Heart right ventricle (tissue), 16 donors: ENCODE measurements at regions of chr9 and their contacts with region 1.

Region 1: GRCh38 chr9:68462105-68462775 is 78.4 kb downstream of the TMEM252 start:
- DNase-seq: peak in 1 of 2 donors; percentile 26
- ATAC-seq: peak; percentile 54 to 85 (median 76)
- H3K4me3 ChIP-seq: no peak overlapping the region
- H3K27ac ChIP-seq: peak overlapping the region in 8 of 10 donors; percentile 0 to 72 (median 42)
- H3K4me1 ChIP-seq: peaks cover 0 to 68% (median 32%) of the 10 kb centered on the region in 9 donors
- H3K27me3 ChIP-seq: no peaks in the 10 kb centered on the region
- CTCF ChIP-seq: no peak

Region 2: GRCh38 chr9:68476847-68477246 is 14.6 kb after region 1 on chr9:
- intact Hi-C with region 1: loop called in 1 of 10 experiments (anchors 2 kb)
- DNase-seq: peak in 1 of 2 donors; percentile 51
- ATAC-seq: peak in 7 of 8 donors; percentile 53 to 71 (median 66)
- H3K4me3 ChIP-seq: no peak overlapping the region
- H3K27ac ChIP-seq: peak overlapping the region in 6 of 10 donors; percentile 8 to 70 (median 17)
- H3K4me1 ChIP-seq: peaks cover 5 to 51% (median 23%) of the 10 kb centered on the region in 9 donors
- H3K27me3 ChIP-seq: no peaks in the 10 kb centered on the region
- CTCF ChIP-seq: no peak

Region 3: DNA sequence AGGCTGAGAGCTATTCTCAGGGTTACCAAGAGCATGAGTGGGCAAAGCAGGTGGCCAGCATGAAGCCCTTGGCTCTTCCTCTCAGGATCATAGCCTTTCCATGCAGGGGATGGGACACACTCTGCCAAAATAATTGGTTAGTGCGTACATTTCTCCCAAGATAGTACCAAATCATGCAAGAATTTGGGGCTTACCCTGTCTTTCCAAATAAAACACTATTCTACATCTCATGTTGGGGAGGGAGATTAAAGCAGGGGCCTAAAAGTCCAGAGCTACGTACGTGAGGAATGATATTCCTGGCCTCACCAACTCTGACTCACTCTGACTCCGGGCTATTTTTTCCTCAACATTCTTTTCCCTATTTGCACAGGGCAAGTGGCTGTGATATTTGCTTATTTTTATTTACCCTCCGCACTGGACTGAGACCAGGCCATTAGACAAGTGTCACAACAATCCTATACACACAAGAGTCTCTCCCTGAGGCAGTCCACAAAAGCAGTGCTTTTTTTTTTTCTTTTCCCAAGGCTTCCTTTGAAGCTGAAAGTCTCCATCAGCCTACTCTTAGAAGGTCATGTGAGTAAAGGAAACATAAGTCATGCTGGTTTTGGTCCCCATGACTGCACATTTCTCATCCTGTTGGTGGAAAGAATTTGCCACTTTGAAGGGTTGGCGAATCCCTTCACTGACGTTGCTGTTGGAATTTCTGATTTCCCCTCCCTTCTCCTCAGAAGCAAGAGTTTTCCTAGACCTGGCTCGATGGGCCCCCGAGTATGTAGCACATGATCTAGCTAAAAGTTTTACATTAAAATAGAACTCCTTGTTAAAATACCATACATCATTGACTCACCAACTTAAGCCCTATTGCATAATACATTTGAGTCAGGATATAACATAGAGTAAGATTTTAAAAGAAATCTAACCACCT is 38.5 kb after region 1 on chr9:
- intact Hi-C with region 1: loop called in 2 of 10 experiments (anchors 5 kb)
- DNase-seq: no peak
- ATAC-seq: peak; percentile 75 to 90 (median 82)
- H3K4me3 ChIP-seq: no peak overlapping the region
- H3K27ac ChIP-seq: peak overlapping the region; percentile 50 to 89 (median 78)
- H3K4me1 ChIP-seq: peaks cover 7 to 86% (median 59%) of the 10 kb centered on the region in 9 donors
- H3K27me3 ChIP-seq: no peaks in the 10 kb centered on the region
- CTCF ChIP-seq: no peak